ENCODE measurements at regions of chr1 and their contacts with region 1.

Region 1: DNA sequence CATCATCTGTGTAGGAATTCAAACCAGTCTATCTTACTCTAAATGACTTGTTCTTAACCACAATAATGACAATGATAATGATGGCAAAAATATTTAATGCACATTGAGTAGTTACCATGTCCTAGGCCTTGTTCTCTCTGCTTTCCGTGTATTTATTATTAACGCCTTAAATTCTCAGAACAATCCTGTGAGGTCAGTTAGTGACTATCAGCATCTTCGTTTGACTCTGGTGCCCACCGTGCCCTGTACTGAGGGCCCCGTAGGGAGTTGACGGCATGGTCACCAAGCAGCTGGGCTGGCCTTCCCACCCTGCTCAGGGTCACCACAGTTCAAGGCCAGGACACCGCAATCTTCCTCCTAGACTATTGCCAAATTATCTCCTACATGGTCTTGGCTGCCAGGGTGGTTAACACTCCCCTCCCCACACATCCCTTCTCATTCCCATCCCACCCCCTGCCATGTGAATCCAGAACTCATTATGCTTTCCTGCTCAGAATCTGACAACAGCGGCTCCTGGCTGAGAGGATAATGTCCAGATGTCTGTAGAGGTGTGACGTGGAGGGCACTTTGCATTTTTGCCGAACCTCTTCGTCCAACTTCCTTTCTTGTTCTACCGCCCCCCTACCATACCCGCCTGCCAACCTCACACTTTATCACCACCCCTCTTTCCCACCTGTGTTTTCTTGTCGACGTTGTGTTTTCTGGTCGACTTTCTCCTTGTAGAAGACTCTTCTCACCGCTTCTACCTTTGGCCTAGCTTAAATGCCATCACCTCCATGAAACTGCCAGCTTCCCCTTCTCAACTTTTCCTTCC is 33.4 kb downstream of the IGFN1 start:
- DNase-seq: no peak
- ATAC-seq: no peak
- H3K4me3 Mint-ChIP-seq: no peak overlapping the region
- H3K27ac Mint-ChIP-seq: no peak overlapping the region
- H3K4me1 Mint-ChIP-seq: no peaks in the 10 kb centered on the region
- H3K27me3 Mint-ChIP-seq: peaks cover 4% of the 10 kb centered on the region
- CTCF ChIP-seq: no peak

Region 2: GRCh38 chr1:201149400-201149799 is 74.7 kb before region 1 on chr1:
- CTCF ChIA-PET with region 1: interaction called, 5 read pairs
- POLR2A ChIA-PET with region 1: no interaction called
- intact Hi-C with region 1: loop called (anchors 1 kb)
- DNase-seq: no peak
- ATAC-seq: no peak
- H3K4me3 Mint-ChIP-seq: no peak overlapping the region
- H3K27ac Mint-ChIP-seq: no peak overlapping the region
- H3K4me1 Mint-ChIP-seq: peaks cover 11% of the 10 kb centered on the region
- H3K27me3 Mint-ChIP-seq: no peaks in the 10 kb centered on the region
- CTCF ChIP-seq: no peak

Measured in activated B cell treated with CpG ODN at 0.5 μM for 24 hours (primary cell).